Sigmoid colon (tissue), 7 donors: ENCODE measurements at regions of chr3 and their contacts with region 1.

Region 1: GRCh38 chr3:5194341-5195159 is 7.0 kb downstream of the EDEM1 start:
- DNase-seq: peak; percentile 72
- H3K4me3 ChIP-seq: no peak overlapping the region
- H3K27ac ChIP-seq: peak overlapping the region in 3 of 4 donors; percentile 35 to 51 (median 45)
- H3K4me1 ChIP-seq: peaks cover 0 to 38% (median 28%) of the 10 kb centered on the region in 4 donors
- H3K27me3 ChIP-seq: no peaks in the 10 kb centered on the region
- CTCF ChIP-seq: no peak
- EP300 ChIP-seq: peak in 1 of 4 donors; percentile 49
- POLR2A ChIP-seq: no peak

Region 2: GRCh38 chr3:4030624-4031023 is 1163.9 kb before region 1 on chr3:
- intact Hi-C with region 1: no loop called
- DNase-seq: no peak
- H3K4me3 ChIP-seq: no peak overlapping the region
- H3K27ac ChIP-seq: no peak overlapping the region
- H3K4me1 ChIP-seq: no peaks in the 10 kb centered on the region
- H3K27me3 ChIP-seq: no peaks in the 10 kb centered on the region
- CTCF ChIP-seq: no peak
- EP300 ChIP-seq: no peak
- POLR2A ChIP-seq: no peak

Region 3: DNA sequence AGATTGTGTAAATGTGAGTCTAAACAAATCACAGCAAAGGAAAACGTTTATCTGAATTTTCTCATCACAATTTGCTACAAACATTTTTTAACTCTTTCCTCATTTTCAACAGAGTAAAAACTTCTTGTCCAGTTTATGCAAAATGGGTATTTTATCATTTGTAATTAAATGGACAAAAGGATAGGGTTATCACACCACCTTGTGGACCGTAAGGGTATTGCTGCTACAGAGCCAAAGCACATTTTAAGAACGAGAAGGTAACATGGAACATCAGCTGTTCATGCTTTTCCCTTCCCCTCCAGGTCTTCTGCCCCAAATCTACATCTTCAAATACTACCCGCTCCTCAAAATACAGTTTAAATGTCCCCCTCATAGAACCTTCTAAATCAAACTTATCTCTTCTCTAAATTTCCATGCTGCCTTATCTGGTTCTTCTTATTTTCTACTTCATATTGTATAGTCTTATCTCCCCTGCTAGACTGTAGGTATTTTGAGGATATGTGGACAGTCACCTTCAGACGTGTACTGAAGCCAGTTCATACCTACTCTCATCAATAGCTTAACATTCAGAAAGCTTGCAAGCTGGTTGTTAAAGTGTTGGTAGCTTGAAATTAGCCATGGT is 904.2 kb before region 1 on chr3:
- intact Hi-C with region 1: loop called (anchors 10 kb)
- DNase-seq: no peak
- H3K4me3 ChIP-seq: no peak overlapping the region
- H3K27ac ChIP-seq: no peak overlapping the region
- H3K4me1 ChIP-seq: no peaks in the 10 kb centered on the region
- H3K27me3 ChIP-seq: no peaks in the 10 kb centered on the region
- CTCF ChIP-seq: peak; percentile 41 to 96 (median 82)
- EP300 ChIP-seq: no peak
- POLR2A ChIP-seq: no peak

Region 4: DNA sequence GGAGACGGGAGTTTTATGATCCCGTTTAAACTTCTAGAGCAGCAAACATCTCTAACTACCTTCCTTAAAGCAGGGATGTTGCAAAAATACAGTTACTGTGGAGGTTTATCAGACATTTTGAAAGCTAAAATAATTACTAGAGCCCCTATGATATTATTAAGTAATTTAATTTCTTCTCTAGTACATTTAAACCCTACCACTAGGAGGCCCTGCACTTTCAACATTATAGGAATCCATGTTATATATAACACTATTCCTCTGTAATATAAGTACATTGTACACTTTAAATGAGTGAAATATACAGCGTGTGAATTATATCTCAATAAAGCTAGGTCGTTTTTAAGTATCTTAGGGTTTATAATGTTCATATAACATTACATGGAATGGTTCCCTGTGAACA is 879.9 kb before region 1 on chr3:
- intact Hi-C with region 1: no loop called
- DNase-seq: no peak
- H3K4me3 ChIP-seq: no peak overlapping the region
- H3K27ac ChIP-seq: peak overlapping the region in 1 of 4 donors; percentile 4
- H3K4me1 ChIP-seq: peaks cover 0 to 6% (median 1%) of the 10 kb centered on the region in 4 donors
- H3K27me3 ChIP-seq: no peaks in the 10 kb centered on the region
- CTCF ChIP-seq: no peak
- EP300 ChIP-seq: no peak
- POLR2A ChIP-seq: no peak

Region 5: DNA sequence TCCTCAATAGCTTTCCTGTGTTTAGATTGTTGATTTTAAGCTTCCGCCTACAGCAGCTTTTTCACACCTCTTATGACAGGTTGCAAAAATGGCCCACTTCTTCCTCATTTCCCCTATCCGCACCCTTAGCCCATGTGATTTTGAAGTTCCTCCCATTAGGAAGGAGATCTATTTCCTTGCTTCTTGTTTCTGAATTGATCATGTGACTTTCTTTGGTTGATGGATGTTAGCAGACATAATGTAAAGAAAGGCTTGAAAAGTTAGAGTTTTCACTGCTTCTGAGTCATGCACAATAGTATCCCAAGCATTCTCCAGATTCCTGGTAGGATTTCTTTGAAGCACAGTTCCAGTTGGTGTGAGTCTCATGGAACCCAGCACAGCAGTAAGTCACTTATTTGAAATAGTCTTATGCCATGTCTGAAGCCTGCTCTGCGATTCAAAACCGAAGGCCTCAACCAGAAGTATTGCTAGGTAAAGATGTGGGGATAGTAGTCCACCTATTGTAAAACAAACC is 69.6 kb after region 1 on chr3:
- intact Hi-C with region 1: no loop called
- DNase-seq: no peak
- H3K4me3 ChIP-seq: no peak overlapping the region
- H3K27ac ChIP-seq: no peak overlapping the region
- H3K4me1 ChIP-seq: no peaks in the 10 kb centered on the region
- H3K27me3 ChIP-seq: no peaks in the 10 kb centered on the region
- CTCF ChIP-seq: no peak
- EP300 ChIP-seq: no peak
- POLR2A ChIP-seq: no peak